GM12878 (cell line): ENCODE measurements at regions of chr7 and their contacts with region 1.

Region 1: DNA sequence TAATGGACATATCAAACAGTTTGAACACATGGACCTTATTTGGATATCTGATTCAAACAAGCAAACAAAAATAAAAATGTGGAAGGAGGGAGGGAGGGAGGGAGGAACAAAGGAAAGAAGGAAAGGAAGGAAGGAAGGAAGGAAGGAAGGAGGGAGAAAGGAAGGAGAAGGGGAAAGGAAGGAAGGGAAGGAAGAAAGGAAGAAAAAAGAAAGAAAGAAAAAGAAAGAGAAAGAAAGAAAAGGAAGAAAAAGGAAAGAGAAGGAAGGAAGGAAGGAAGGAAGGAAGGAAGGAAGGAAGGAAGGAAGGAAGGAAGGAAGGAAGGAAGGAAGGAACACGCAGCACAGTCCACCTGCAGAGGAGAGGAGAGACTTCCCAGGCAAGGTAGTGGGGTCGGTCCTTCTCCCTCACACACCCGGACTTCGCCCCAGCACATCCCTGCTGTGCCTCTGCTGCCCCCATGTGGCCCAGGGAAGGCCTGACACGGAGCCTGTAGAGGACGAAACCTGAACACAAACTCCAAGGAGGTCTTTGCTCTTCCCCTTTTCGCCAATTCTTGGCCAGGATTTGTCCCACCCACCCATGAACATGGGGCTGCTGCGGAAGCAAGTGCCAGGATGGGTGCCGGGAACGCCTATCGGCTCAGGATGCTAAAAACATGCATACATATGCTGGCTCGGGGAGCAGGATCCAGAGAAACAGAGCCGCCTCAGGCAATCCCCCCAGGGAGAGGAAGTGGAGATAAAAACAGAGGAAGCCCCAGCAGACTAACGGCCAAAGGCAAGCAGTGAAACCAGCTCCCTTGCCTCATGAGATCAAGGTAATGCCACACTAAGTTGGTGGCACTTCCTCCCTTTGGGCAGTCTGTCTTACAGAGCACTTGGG is 52.3 kb upstream of the DGKI start:
- DNase-seq: peak; percentile 48
- ATAC-seq: peak; percentile 79
- H3K4me3 ChIP-seq: 0 out of 2 replicates have a peak overlapping the region, but pooled peaks have one; percentile 1
- H3K27ac ChIP-seq: peak overlapping the region; percentile 75
- H3K4me1 ChIP-seq: peaks cover 33% of the 10 kb centered on the region
- H3K27me3 ChIP-seq: no peaks in the 10 kb centered on the region
- CTCF ChIP-seq: peak; percentile 88 to 98 (median 98)
- EP300 ChIP-seq: no peak
- POLR2A ChIP-seq: no peak
- RAD21 ChIP-seq: peak; percentile 99

Region 2: GRCh38 chr7:137606061-137606674 is 292.9 kb before region 1 on chr7:
- CTCF ChIA-PET with region 1: interaction called, 25 read pairs
- POLR2A ChIA-PET with region 1: interaction called, 4 read pairs
- RAD21 ChIA-PET with region 1: interaction called, 22 read pairs
- SMC1A ChIA-PET with region 1: interaction called, 20 read pairs
- in situ Hi-C with region 1: loop called (anchors 5 kb)
- intact Hi-C with region 1: loop called (anchors 1 kb)
- DNase-seq: no peak
- ATAC-seq: peak; percentile 51; the same call in 1 of the 3 replicates
- H3K4me3 ChIP-seq: no peak overlapping the region
- H3K27ac ChIP-seq: no peak overlapping the region
- H3K4me1 ChIP-seq: no peaks in the 10 kb centered on the region
- H3K27me3 ChIP-seq: no peaks in the 10 kb centered on the region
- CTCF ChIP-seq: peak in 1 of 3 experiments; percentile 29; a peak in 2 of 6 replicates
- EP300 ChIP-seq: no peak
- POLR2A ChIP-seq: no peak
- RAD21 ChIP-seq: no peak

Region 3: GRCh38 chr7:137789215-137789882 is 109.7 kb before region 1 on chr7:
- CTCF ChIA-PET with region 1: no interaction called
- POLR2A ChIA-PET with region 1: no interaction called
- RAD21 ChIA-PET with region 1: interaction called, 7 read pairs
- SMC1A ChIA-PET with region 1: interaction called, 10 read pairs
- in situ Hi-C with region 1: no loop called
- intact Hi-C with region 1: no loop called
- DNase-seq: no peak
- ATAC-seq: no peak
- H3K4me3 ChIP-seq: no peak overlapping the region
- H3K27ac ChIP-seq: no peak overlapping the region
- H3K4me1 ChIP-seq: no peaks in the 10 kb centered on the region
- H3K27me3 ChIP-seq: no peaks in the 10 kb centered on the region
- CTCF ChIP-seq: no peak
- EP300 ChIP-seq: no peak
- POLR2A ChIP-seq: no peak
- RAD21 ChIP-seq: no peak

Region 4: DNA sequence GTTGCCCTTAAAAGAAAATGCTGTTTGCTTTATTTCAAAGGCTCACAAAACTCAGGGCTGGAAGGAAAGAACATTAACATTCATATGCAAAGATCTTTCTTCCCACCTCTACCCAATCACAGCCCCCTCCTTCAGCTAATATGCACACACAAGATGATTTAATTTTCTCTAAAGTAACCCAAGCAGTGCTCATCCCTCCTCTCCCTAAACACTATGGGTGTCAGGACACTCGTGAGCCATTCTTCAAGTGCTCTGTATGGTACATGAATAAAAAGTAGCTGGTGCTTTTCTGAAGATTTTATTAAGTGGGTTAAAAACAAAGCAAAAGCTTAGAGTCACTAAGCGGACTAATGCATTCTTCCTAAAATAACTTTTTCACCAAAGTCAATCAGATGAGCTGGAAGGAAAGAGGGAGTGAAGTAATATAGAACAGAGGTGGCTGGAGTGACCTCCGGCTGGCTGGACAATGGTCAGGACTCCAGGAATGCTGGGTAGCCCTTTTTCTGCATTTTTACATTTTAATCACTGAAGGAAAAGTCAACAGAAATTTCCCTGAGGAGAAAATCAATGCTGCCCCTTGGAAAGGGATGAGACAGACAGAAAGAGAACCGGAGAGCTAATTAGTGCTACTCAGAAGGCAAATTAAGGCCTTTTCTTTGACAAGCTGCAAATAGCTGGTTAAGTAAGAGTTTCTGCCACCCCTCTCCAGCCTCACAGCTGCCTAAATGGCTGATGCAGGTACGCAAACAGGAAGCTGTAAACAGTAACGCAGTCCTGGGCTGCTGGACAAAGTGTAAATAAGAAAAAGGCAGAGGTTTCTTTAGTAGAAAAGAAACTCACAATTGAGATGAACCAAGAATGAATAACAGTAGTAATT is 58.9 kb before region 1 on chr7:
- CTCF ChIA-PET with region 1: interaction called, 19 read pairs
- POLR2A ChIA-PET with region 1: interaction called, 3 read pairs
- RAD21 ChIA-PET with region 1: interaction called, 13 read pairs
- SMC1A ChIA-PET with region 1: interaction called, 21 read pairs
- in situ Hi-C with region 1: no loop called
- intact Hi-C with region 1: no loop called
- DNase-seq: no peak
- ATAC-seq: 0 out of 3 replicates have a peak, but pooled peaks have one; percentile 11
- H3K4me3 ChIP-seq: no peak overlapping the region
- H3K27ac ChIP-seq: no peak overlapping the region
- H3K4me1 ChIP-seq: no peaks in the 10 kb centered on the region
- H3K27me3 ChIP-seq: peaks cover 0 to 2% of the 10 kb centered on the region in 2 experiments; a peak in 2 of 4 replicates
- CTCF ChIP-seq: no peak
- EP300 ChIP-seq: no peak
- POLR2A ChIP-seq: no peak
- RAD21 ChIP-seq: no peak

Region 5: DNA sequence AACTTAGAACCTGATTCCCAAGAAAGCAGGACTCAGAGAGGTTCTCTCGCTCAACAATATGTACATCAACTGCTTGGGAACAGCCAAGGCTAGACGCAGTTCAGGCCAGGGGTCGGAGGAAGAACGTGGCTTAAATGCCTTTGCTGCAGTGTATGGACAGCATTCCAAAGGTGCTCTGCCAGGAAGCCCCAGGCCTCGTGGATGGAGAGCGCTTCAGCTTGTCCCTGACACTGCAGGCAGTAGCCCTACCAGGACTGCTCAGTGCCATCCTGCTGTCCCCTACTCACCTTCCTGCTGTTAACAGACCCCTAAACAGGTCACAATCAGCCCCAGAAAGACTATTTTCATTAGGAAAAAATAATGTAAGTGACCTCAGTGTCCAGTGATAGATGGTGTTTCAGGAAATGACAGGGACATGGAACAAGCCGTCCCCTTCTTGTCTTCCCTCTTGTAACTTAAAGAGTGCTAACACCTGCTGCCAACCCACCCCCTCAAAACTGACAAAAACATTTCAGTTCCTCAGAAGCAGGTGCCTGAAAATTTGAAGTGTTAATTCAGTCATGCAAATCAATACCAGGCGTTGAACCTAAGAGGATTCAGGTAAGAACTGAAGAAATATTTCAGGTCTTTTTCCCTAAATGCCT is 86.3 kb after region 1 on chr7:
- CTCF ChIA-PET with region 1: interaction called, 704 read pairs
- POLR2A ChIA-PET with region 1: no interaction called
- RAD21 ChIA-PET with region 1: interaction called, 8 read pairs
- SMC1A ChIA-PET with region 1: interaction called, 15 read pairs
- in situ Hi-C with region 1: no loop called
- intact Hi-C with region 1: no loop called
- DNase-seq: peak; percentile 69
- ATAC-seq: peak; percentile 58
- H3K4me3 ChIP-seq: peak overlapping the region; percentile 4; the same call in 1 of the 2 replicates
- H3K27ac ChIP-seq: peak overlapping the region; percentile 95
- H3K4me1 ChIP-seq: peaks cover 87% of the 10 kb centered on the region
- H3K27me3 ChIP-seq: no peaks in the 10 kb centered on the region
- CTCF ChIP-seq: no peak
- EP300 ChIP-seq: peak; percentile 83 to 90; a peak in 3 of 4 replicates
- POLR2A ChIP-seq: peak; percentile 41; the same call in 1 of the 2 replicates
- RAD21 ChIP-seq: no peak

Region 6: GRCh38 chr7:138161600-138162081 is 262.6 kb after region 1 on chr7:
- CTCF ChIA-PET with region 1: interaction called, 13 read pairs
- POLR2A ChIA-PET with region 1: no interaction called
- RAD21 ChIA-PET with region 1: interaction called, 4 read pairs
- SMC1A ChIA-PET with region 1: interaction called, 5 read pairs
- in situ Hi-C with region 1: no loop called
- intact Hi-C with region 1: loop called (anchors 5 kb)
- DNase-seq: peak; percentile 76
- ATAC-seq: peak; percentile 100
- H3K4me3 ChIP-seq: no peak overlapping the region
- H3K27ac ChIP-seq: no peak overlapping the region
- H3K4me1 ChIP-seq: peaks cover 5% of the 10 kb centered on the region
- H3K27me3 ChIP-seq: no peaks in the 10 kb centered on the region
- CTCF ChIP-seq: peak; percentile 70 to 91 (median 85)
- EP300 ChIP-seq: no peak
- POLR2A ChIP-seq: no peak
- RAD21 ChIP-seq: peak; percentile 81